ENCODE measurements at regions of chr6 and their contacts with region 1.

Region 1: GRCh38 chr6:44475779-44476434 is 88.4 kb downstream of the CDC5L start:
- DNase-seq: peak; percentile 73
- H3K4me3 Mint-ChIP-seq: no peak overlapping the region
- H3K27ac Mint-ChIP-seq: no peak overlapping the region
- H3K4me1 Mint-ChIP-seq: peaks cover 2% of the 10 kb centered on the region
- H3K27me3 Mint-ChIP-seq: peaks cover 1% of the 10 kb centered on the region

Region 2: DNA sequence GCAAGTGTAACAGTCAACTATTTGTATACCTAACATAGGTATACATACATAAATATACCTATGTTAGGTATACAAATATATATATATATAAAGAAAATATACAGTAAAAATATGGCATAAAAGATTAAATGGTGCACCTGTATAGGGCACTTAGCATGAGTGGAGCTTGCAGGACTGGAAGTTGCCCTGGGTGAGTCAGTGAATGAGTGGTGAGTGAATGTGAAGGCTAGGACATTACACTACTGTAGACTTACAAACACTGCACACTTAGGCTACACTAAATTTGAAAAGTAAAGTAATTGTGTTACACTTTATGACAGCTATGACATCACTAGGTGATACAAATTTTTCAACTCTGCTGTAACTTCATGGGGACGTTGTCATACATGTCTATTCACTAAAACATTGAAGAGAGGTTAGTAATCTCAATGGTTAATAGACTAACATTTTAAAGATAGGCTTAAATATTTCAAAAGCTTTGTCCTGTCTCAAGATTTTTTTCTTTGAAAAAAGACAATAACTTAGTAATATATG is 22.7 kb before region 1 on chr6:
- CTCF ChIA-PET with region 1: interaction called, 33 read pairs
- POLR2A ChIA-PET with region 1: no interaction called
- DNase-seq: no peak
- H3K4me3 Mint-ChIP-seq: no peak overlapping the region
- H3K27ac Mint-ChIP-seq: no peak overlapping the region
- H3K4me1 Mint-ChIP-seq: peaks cover 5% of the 10 kb centered on the region
- H3K27me3 Mint-ChIP-seq: no peaks in the 10 kb centered on the region

Region 3: DNA sequence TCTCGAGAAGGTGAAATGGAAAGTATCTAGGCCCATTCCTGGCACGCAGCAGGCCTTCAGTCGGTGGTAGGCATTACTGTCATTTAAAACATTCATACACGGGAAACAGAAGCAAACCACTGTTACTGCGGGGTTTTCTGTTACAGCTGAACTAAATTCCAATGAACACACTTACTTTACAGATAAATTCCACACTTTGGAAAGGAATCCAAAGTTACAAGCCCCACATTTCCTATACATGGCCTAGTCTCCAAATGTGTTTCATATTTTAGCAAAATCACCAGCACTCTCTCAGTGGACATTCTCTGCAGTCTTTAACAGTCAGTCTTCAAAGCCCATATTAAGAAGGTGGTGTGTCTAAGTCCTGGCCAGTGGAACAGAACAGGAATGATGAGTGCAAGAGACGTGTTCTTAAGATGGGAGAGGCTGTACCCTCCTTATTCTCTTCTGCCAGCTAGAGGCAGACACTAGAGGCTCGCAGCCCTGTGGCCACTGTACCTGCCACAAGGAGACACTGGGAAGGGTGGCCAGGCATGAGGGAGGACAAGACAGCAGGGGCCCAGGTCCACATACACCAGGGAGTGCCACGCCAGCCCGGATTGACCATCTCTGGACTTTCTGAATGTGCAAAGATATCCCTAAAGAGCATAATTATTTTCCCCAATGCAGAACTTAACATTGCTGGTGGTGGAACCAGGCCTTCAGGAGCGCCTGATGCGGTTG is 12.0 kb before region 1 on chr6:
- CTCF ChIA-PET with region 1: interaction called, 33 read pairs
- POLR2A ChIA-PET with region 1: no interaction called
- DNase-seq: no peak
- H3K4me3 Mint-ChIP-seq: no peak overlapping the region
- H3K27ac Mint-ChIP-seq: no peak overlapping the region
- H3K4me1 Mint-ChIP-seq: no peaks in the 10 kb centered on the region
- H3K27me3 Mint-ChIP-seq: peaks cover 5% of the 10 kb centered on the region

Region 4: GRCh38 chr6:45922728-45923351 is 1446.9 kb after region 1 on chr6:
- CTCF ChIA-PET with region 1: interaction called, 17 read pairs
- POLR2A ChIA-PET with region 1: no interaction called
- DNase-seq: peak; percentile 76
- H3K4me3 Mint-ChIP-seq: no peak overlapping the region
- H3K27ac Mint-ChIP-seq: peak overlapping the region; percentile 58
- H3K4me1 Mint-ChIP-seq: peaks cover 43% of the 10 kb centered on the region
- H3K27me3 Mint-ChIP-seq: no peaks in the 10 kb centered on the region

Measured in activated CD4-positive, alpha-beta T cell treated with anti-CD3 and anti-CD28 coated beads, Interleukin-2, amount 10 ng/mL, durations not matched to agents 7 days and 5 days (primary cell).